ENCODE measurements at regions of chr18 and their contacts with region 1.

Region 1: DNA sequence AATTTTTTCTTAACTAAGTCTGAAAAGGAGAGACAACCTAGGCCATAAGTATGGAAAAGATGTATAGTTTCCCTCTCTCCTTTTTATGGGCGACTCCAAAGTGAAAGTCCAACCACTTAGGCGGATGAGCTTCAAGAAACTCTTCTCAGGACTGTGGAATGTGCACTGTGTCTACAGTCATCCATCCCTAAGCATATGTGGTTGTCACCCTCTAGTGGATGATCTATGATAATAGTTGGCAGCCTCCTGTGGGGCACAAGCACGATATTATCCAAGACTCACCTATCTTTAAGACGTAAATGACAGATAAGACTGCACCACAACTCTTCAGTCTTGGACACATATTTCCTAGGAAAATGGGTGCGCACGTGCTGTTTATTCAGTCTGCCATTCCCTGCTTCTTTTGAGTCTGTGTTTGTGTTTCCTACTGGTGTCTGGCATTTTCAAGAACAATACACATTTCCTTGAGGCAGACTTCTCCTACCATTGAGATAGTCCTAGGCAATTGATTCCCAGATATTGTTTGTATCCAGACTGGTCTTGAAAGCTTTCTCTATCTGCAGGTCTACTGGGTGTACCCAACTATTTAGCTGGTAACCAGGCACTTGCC is 145.5 kb upstream of the CTAGE1 start:
- DNase-seq: peak in 1 of 2 donors; percentile 68
- ATAC-seq: peak; percentile 63 to 77 (median 72)
- H3K4me3 ChIP-seq: peak overlapping the region in 9 of 10 donors; percentile 19 to 74 (median 57)
- H3K27ac ChIP-seq: peak overlapping the region; percentile 87 to 99 (median 96)
- H3K4me1 ChIP-seq: peaks cover 0 to 38% (median 27%) of the 10 kb centered on the region in 9 donors
- H3K27me3 ChIP-seq: peaks cover 0 to 47% (median 0%) of the 10 kb centered on the region in 7 donors
- CTCF ChIP-seq: peak; percentile 56 to 87 (median 82)

Region 2: GRCh38 chr18:21897811-21898210 is 665.4 kb before region 1 on chr18:
- intact Hi-C with region 1: loop called in 3 of 10 experiments (anchors 5 to 10 kb)
- DNase-seq: peak in 1 of 2 donors; percentile 47
- ATAC-seq: peak; percentile 56 to 81 (median 68)
- H3K4me3 ChIP-seq: no peak overlapping the region
- H3K27ac ChIP-seq: no peak overlapping the region
- H3K4me1 ChIP-seq: peaks cover 0 to 15% (median 0%) of the 10 kb centered on the region in 9 donors
- H3K27me3 ChIP-seq: no peaks in the 10 kb centered on the region
- CTCF ChIP-seq: peak; percentile 36 to 79 (median 68)

Region 3: DNA sequence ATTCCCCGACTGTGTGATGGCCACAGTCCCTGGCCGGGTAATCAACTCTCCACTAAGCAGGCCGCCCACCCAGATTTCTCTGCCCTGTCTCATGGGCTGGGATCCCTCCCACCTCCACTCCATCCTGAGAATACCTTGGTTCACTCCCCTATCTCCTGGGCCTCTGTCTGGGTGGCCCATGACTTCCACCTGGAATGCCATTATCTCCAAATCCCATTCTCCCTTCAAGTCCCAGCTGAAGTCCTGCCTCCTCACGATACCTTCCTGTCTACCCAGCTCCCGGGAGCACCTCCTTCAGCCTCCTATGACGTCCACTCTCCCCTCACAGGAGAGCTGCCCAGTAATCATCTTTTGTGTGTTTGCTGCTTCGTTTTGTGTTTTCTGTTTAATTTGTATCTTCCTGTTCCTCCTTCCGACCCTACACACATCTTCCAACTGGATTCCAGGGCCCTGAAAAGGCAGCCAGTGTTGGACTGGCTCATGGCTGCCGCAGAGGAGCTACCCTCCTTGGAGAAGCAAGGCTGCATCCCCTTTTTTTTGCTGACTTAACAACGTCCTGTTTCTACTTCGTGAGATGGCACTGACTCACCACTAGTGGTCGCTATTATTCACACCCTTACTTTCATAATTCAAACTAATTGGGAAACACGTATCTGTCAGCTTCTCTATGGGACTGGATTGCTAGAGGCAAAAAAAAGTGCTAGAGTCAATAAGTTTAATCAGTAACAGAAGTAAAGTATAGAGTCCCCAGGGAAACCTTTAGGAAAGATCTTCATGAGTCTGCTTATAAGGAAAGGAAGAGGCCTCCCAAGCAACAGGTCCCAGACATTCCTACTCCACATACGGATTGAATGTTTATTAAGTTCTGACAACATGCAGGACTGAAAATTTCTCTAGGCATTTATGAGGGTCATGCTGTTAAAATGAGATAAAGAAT is 565.7 kb before region 1 on chr18:
- intact Hi-C with region 1: loop called in 7 of 10 experiments (anchors 2 to 5 kb)
- DNase-seq: peak in 1 of 2 donors; percentile 20
- ATAC-seq: peak; percentile 32 to 87 (median 65)
- H3K4me3 ChIP-seq: no peak overlapping the region
- H3K27ac ChIP-seq: peak overlapping the region in 9 of 10 donors; percentile 17 to 82 (median 68)
- H3K4me1 ChIP-seq: peaks cover 0 to 34% (median 9%) of the 10 kb centered on the region in 9 donors
- H3K27me3 ChIP-seq: no peaks in the 10 kb centered on the region
- CTCF ChIP-seq: peak; percentile 65 to 90 (median 85)

Region 4: GRCh38 chr18:22267697-22268096 is 295.5 kb before region 1 on chr18:
- intact Hi-C with region 1: loop called in 4 of 10 experiments (anchors 2 to 5 kb)
- DNase-seq: peak; percentile 70 to 85
- ATAC-seq: peak; percentile 83 to 97 (median 92)
- H3K4me3 ChIP-seq: peak overlapping the region in 5 of 10 donors; percentile 44 to 52 (median 48)
- H3K27ac ChIP-seq: peak overlapping the region; percentile 78 to 95 (median 91)
- H3K4me1 ChIP-seq: peaks cover 0 to 41% (median 4%) of the 10 kb centered on the region in 9 donors
- H3K27me3 ChIP-seq: no peaks in the 10 kb centered on the region
- CTCF ChIP-seq: no peak

Region 5: GRCh38 chr18:22363867-22364463 is 199.2 kb before region 1 on chr18:
- intact Hi-C with region 1: loop called in 2 of 10 experiments (anchors 5 to 10 kb)
- DNase-seq: no peak
- ATAC-seq: peak; percentile 47 to 81 (median 72)
- H3K4me3 ChIP-seq: no peak overlapping the region
- H3K27ac ChIP-seq: no peak overlapping the region
- H3K4me1 ChIP-seq: no peaks in the 10 kb centered on the region
- H3K27me3 ChIP-seq: no peaks in the 10 kb centered on the region
- CTCF ChIP-seq: peak in 7 of 9 donors; percentile 32 to 69 (median 48)

Region 6: DNA sequence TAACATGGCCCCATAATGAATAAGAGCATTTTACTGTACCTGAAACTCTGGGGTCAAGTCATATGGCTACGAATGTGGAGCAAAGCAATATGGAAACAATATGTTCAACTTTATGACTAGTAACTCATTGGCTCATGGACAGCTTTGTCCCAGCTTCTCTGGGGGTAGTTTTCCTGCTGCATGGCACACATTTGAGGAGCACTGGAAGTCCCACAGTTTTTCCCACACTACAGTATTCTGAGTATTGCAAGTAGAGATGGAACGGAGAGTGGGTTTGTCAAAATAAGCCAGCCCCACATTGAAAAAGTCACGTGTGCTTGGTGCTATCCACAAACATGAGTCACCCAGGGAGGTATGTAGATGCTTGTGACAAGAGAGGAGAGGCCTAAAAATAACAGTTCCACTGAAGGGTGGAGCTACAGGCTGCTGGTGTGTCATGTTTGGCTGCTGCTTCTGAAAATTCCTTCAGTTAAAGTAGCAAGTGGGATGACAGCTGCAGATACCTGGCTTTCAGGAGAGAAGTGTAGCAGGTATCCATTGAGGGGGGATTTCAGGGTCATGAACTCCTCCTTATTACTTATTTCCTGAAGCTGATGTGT is 97.2 kb before region 1 on chr18:
- intact Hi-C with region 1: loop called in 7 of 10 experiments (anchors 2 to 10 kb)
- DNase-seq: peak in 1 of 2 donors; percentile 74
- ATAC-seq: peak; percentile 85 to 95 (median 90)
- H3K4me3 ChIP-seq: no peak overlapping the region
- H3K27ac ChIP-seq: peak overlapping the region; percentile 56 to 90 (median 85)
- H3K4me1 ChIP-seq: peaks cover 15 to 48% (median 42%) of the 10 kb centered on the region in 9 donors
- H3K27me3 ChIP-seq: no peaks in the 10 kb centered on the region
- CTCF ChIP-seq: no peak

Region 7: DNA sequence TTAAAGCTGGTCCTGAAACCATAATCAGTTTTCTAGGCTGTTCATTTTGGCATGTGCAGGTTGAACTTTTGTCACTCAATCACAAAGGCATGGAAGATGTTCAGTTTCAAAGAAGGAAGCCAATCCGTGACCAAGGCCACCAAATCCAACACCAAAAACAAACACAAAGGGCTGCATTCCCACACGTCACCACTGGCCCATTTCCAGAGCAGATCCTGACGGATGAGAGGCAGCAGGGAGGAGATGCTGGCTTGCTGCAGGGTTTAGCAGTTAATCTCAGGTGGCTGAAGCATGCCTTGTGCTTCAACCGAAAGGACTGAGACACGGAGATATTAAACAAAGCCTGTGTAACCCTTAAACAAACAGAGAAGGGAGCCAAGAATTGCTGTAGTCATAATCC is 46.4 kb after region 1 on chr18:
- intact Hi-C with region 1: loop called in 1 of 10 experiments (anchors 2 kb)
- DNase-seq: peak; percentile 66 to 86
- ATAC-seq: peak; percentile 47 to 84 (median 63)
- H3K4me3 ChIP-seq: no peak overlapping the region
- H3K27ac ChIP-seq: peak overlapping the region in 9 of 10 donors; percentile 1 to 79 (median 57)
- H3K4me1 ChIP-seq: peaks cover 0 to 60% (median 29%) of the 10 kb centered on the region in 9 donors
- H3K27me3 ChIP-seq: no peaks in the 10 kb centered on the region
- CTCF ChIP-seq: no peak

Measured in heart right ventricle (tissue), 16 donors.